Activated CD4-positive, alpha-beta T cell treated with anti-CD3 and anti-CD28 coated beads, Interleukin-2, amount 10 ng/mL, durations not matched to agents 24 days and 14 days (primary cell): ENCODE measurements at regions of chr10 and their contacts with region 1.

Region 1: DNA sequence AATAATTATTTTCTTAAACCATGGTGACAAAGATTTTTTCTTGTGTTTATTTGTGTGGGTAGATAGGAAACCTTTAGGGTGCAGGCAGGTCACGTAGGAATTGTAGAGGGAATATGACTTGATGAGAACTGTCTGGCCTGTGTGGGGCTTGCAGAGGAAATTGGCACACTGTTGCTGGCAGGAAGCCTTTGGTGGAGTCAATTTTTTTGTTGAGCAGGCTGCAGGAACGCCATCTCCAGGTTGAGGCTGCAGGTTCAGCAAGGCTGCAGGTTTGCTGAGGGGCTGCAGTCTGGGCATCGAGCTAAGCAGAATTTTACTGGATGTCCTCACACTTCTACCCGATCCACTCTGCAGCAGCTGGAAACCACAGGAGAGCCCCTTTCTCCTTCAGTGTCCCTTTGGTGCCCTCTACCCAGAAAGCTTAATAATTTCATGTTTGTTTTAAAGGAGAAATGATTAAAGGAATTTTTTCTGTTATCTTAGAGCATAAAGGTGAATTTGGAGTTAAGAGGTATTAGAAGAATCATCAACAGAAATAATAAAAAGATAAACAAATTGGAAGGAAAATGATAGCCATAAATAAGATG is 37.0 kb downstream of the TBC1D12 start:
- DNase-seq: no peak
- H3K4me3 Mint-ChIP-seq: no peak overlapping the region
- H3K27ac Mint-ChIP-seq: no peak overlapping the region
- H3K4me1 Mint-ChIP-seq: no peaks in the 10 kb centered on the region
- H3K27me3 Mint-ChIP-seq: peaks cover 3% of the 10 kb centered on the region

Region 2: GRCh38 chr10:93762979-93763391 is 676.4 kb before region 1 on chr10:
- intact Hi-C with region 1: no loop called
- DNase-seq: no peak
- H3K4me3 Mint-ChIP-seq: no peak overlapping the region
- H3K27ac Mint-ChIP-seq: no peak overlapping the region
- H3K4me1 Mint-ChIP-seq: peaks cover 2% of the 10 kb centered on the region
- H3K27me3 Mint-ChIP-seq: peaks cover 40% of the 10 kb centered on the region

Region 3: DNA sequence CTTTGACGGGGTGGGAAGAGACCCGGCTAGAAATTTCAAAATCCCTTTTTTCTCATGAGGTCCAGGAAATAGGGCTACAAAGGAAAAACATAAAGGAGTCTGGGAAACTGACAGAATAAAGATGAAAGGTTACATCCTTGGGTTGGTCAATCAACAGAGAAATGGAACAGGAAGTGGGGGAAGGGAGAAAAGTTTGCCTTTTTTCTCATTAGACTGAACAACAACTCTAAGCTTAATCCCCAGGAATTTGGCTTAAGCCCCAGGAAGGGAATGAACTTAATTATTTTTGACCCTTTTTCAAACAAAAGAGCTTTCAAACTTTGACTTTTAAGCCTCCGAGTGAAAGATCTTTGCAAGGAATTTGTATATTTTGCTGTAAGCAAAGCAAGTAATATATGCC is 648.9 kb before region 1 on chr10:
- intact Hi-C with region 1: no loop called
- DNase-seq: no peak
- H3K4me3 Mint-ChIP-seq: no peak overlapping the region
- H3K27ac Mint-ChIP-seq: no peak overlapping the region
- H3K4me1 Mint-ChIP-seq: no peaks in the 10 kb centered on the region
- H3K27me3 Mint-ChIP-seq: peaks cover 9% of the 10 kb centered on the region

Region 4: DNA sequence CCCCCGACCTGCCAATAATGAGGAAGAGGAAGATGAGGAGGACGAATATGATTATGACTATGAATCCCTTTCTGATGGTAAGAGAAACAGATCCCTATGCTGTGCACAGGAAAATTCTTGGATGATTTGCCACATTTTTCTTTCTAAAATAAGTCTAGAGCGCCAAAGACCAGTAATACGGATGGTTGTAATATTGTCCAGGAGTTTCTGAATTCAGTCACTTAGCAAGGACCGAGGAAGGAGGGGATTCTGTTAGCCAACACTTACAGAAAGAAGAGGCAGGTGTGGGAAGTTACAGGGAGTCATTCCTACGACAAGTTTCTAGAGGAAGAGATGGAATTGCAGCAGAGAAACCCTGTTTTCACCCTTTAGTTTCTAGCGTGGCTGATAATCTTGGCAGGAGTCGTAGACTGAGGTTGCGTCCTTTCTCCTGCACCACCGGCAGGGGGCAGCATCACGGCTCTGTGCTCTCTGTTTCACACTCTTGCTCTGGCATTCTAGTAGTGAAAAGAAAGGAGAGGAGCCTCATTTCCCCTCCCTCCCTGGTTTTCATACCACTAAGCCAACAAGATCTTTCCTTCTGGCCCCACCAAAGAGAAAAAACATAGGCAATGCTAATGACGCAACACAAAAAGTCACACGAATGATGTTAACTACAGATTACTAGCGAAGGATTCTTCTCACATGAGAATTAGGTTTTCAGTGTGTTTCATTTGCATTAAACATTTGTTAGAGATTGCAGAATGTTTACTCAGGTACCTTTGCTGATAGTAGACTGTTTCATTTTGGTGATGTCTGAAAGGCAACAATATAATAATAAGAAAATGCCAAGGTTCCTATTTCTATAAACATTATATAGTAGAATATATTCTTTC is 159.3 kb before region 1 on chr10:
- intact Hi-C with region 1: loop called (anchors 1 kb)
- DNase-seq: peak; percentile 86
- H3K4me3 Mint-ChIP-seq: no peak overlapping the region
- H3K27ac Mint-ChIP-seq: no peak overlapping the region
- H3K4me1 Mint-ChIP-seq: peaks cover 2% of the 10 kb centered on the region
- H3K27me3 Mint-ChIP-seq: peaks cover 23% of the 10 kb centered on the region